HCT116 (cell line): ENCODE measurements at regions of chr1 and their contacts with region 1.

Region 1: DNA sequence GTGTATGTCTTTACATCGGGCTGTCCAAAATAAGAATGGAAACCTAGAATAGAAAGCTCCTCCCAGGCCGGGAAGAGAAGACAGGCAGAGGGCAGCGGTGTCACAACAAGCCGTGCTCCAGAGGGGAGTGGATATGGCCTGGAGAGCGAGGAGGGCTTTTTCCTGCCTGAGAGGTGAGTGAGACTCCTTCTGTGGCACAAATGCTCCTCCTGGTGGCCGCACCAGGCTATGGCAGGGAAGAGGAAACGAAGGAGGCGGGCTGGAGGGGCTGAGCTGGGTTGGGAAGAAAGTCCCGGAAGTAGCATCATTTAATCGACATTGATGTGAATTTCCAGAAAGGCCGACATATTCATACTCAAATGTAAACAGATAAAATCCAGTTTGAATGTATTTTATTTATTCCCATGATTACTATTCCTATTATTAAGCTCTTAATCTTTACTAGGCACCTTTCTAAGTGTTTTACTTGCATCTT is 54.7 kb downstream of the MEF2D start:
- DNase-seq: peak; percentile 81
- ATAC-seq: peak; percentile 97
- H3K4me3 ChIP-seq: no peak overlapping the region
- H3K27ac ChIP-seq: peak overlapping the region; percentile 15; the same call in 1 of the 2 replicates
- H3K4me1 ChIP-seq: peaks cover 5 to 18% of the 10 kb centered on the region in 2 experiments; a peak in 3 of 4 replicates
- H3K27me3 ChIP-seq: no peaks in the 10 kb centered on the region
- CTCF ChIP-seq: peak; percentile 91 to 97 (median 97)
- POLR2A ChIP-seq: peak; percentile 32
- RAD21 ChIP-seq: peak; percentile 99

Region 2: DNA sequence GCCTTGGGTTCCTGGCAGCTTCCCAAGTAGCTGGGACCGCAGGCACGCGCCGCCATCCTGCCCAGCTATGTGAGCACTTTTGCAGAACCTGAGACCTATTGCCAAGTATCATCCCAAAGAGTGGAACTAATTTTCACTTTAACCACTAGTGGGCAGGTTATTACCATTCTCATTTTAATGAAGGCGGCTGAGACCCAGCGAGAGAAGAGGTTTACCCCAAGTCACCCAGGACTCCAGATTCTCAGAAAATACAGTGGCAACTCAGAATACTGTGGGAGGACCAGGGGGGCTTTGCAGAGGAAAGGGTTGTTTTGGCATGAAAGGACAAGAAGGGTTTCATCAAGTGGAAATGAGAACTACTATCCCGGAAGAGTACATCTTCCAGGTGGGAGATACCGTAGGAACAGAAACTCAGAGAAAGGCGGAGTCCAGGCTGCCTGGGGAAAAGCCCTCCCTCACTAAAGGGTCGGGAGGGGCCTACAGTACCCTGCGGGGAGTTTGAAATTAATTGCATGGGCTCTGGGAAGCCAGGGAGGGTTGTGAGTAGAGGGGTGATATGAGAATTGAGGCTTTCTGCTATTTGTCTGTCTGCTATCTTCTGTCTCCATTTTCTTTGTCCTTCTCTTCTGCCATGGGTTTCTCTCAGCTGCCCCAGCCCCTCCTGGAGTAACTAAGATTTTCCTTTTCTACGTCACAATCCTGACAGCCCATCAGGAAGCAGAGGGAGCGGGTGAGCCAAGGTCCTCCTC is 299.6 kb before region 1 on chr1:
- CTCF ChIA-PET with region 1: no interaction called
- POLR2A ChIA-PET with region 1: no interaction called
- RAD21 ChIA-PET with region 1: no interaction called
- intact Hi-C with region 1: loop called (anchors 10 kb)
- DNase-seq: peak; percentile 74
- ATAC-seq: peak; percentile 82
- H3K4me3 ChIP-seq: no peak overlapping the region
- H3K27ac ChIP-seq: no peak overlapping the region
- H3K4me1 ChIP-seq: peaks cover 9 to 17% of the 10 kb centered on the region in 2 experiments
- H3K27me3 ChIP-seq: no peaks in the 10 kb centered on the region; the same call in 1 of the 2 replicates
- CTCF ChIP-seq: peak; percentile 61 to 91 (median 82)
- POLR2A ChIP-seq: no peak
- RAD21 ChIP-seq: peak; percentile 91

Region 3: DNA sequence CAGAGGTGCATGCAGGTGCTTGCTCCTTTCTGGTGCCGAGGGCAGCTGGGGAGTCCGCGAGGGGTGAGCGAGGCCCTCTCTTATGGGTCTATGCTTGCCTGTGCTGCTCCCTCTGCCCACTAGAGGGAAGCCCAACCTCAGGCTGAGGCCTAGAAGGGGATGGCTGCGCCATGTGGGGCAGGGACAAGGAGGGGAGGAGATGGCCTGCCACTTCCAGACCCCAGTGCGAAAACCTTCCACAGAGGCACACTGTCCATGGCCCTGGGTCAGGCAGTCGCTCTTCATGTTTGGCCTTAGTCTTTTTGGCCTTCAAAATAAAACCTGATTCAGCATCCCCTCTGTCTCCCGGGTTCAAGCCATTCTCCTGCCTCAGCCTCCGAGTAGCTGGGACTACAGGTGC is 62.8 kb before region 1 on chr1:
- CTCF ChIA-PET with region 1: interaction called, 322 read pairs
- POLR2A ChIA-PET with region 1: interaction called, 25 read pairs
- RAD21 ChIA-PET with region 1: interaction called, 33 to 51 read pairs
- intact Hi-C with region 1: loop called (anchors 1 kb)
- DNase-seq: peak; percentile 45
- ATAC-seq: peak; percentile 91
- H3K4me3 ChIP-seq: no peak overlapping the region
- H3K27ac ChIP-seq: no peak overlapping the region
- H3K4me1 ChIP-seq: peaks cover 8 to 9% of the 10 kb centered on the region in 2 experiments
- H3K27me3 ChIP-seq: no peaks in the 10 kb centered on the region
- CTCF ChIP-seq: peak; percentile 87 to 92 (median 91)
- POLR2A ChIP-seq: no peak
- RAD21 ChIP-seq: peak; percentile 94

Region 4: DNA sequence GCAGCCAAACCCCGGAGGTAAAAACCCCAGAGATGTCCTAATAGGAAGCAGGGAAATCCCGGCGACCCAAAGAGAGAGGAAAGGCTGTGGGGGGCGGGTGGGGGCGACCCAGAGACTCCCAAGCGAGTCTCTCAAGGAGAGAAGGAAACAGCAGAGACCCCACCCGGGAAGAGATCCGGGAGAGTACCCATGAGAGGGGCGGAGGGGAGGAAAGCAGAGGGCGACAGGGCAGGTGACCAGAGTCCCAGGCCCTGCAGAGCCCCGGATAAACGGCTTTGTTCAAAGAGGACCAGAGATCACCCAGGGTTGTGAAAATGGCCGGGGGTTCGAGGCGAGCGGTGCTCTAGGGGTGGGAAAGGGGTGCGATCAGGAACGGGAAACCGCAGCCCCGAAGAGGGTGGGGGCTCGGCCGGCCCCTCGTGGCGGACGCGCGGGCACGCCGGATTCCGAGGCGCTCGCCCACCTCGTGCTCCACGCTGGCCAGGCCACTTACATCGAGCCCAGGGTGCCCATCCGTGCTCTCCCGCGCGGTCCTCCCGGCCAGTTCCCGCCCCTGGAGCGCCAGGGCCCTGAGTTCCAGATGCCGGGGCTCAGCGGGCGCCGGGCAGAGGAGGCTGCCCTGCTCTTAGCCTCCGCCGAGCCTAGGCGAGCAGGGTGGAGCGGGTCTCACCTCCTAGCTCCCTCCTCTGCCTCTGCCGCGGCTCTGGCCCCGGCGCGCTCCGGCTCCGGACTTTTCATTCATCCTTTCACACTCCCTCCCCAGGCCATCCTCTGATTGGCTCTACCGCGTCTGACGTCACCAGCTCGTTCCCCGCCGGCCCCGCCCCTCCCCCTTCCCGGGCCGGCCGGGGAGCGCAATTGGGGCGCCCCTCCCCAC is 24.5 kb before region 1 on chr1:
- CTCF ChIA-PET with region 1: interaction called, 6 read pairs
- POLR2A ChIA-PET with region 1: interaction called, 4 read pairs
- RAD21 ChIA-PET with region 1: interaction called in 1 of 2 experiments, 11 read pairs
- intact Hi-C with region 1: no loop called
- DNase-seq: peak; percentile 71
- ATAC-seq: peak; percentile 92
- H3K4me3 ChIP-seq: peak overlapping the region; percentile 69 to 73
- H3K27ac ChIP-seq: peak overlapping the region; percentile 76
- H3K4me1 ChIP-seq: peaks cover 10 to 46% of the 10 kb centered on the region in 2 experiments; a peak in 3 of 4 replicates
- H3K27me3 ChIP-seq: no peaks in the 10 kb centered on the region
- CTCF ChIP-seq: no peak
- POLR2A ChIP-seq: peak; percentile 93
- RAD21 ChIP-seq: no peak

Region 5: GRCh38 chr1:156500797-156501499 is 55.1 kb after region 1 on chr1:
- CTCF ChIA-PET with region 1: interaction called, 11 read pairs
- POLR2A ChIA-PET with region 1: no interaction called
- RAD21 ChIA-PET with region 1: interaction called, 3 read pairs
- intact Hi-C with region 1: no loop called
- DNase-seq: peak; percentile 86
- ATAC-seq: peak; percentile 76
- H3K4me3 ChIP-seq: peak overlapping the region; percentile 89 to 97
- H3K27ac ChIP-seq: peak overlapping the region; percentile 99
- H3K4me1 ChIP-seq: peaks cover 57 to 89% of the 10 kb centered on the region in 2 experiments
- H3K27me3 ChIP-seq: no peaks in the 10 kb centered on the region
- CTCF ChIP-seq: peak in 2 of 3 experiments; percentile 54 to 59; a peak in 4 of 6 replicates
- POLR2A ChIP-seq: no peak
- RAD21 ChIP-seq: no peak

Region 6: DNA sequence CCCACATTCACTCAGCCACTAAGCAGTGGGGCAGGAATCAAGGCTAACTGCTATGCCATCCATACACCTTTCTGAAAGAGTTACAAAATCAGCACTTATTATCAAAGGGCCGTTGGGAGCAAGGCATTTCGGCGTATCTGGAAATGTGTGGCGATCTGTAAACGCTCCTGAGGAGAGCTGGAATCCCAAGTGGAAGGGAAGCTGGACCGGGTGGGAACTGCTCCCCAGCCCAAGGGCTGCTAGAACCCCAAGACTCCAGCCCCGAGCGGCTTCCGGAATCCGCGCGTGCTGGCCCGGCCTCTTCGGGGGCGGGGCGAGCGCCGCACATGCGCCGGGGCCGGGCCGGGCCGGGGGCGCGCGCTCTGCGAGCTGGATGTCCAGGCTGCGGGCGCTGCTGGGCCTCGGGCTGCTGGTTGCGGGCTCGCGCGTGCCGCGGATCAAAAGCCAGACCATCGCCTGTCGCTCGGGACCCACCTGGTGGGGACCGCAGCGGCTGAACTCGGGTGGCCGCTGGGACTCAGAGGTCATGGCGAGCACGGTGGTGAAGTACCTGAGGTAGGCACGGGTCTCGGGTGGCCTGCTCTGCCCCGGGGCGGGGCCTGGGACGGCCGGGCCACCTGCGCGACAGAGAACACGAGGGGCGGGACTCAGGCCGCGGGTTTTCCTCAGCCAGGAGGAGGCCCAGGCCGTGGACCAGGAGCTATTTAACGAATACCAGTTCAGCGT is 145.8 kb after region 1 on chr1 and contains the start of gene NAXE:
- CTCF ChIA-PET with region 1: no interaction called
- POLR2A ChIA-PET with region 1: no interaction called
- RAD21 ChIA-PET with region 1: no interaction called
- intact Hi-C with region 1: no loop called
- DNase-seq: no peak
- ATAC-seq: peak; percentile 88
- H3K4me3 ChIP-seq: peak within 1 kb of the TSS; percentile 60 to 95
- H3K27ac ChIP-seq: peak within 1 kb of the TSS; percentile 89
- H3K4me1 ChIP-seq: peaks cover 6 to 30% of the 10 kb centered on the region in 2 experiments; a peak in 3 of 4 replicates
- H3K27me3 ChIP-seq: no peaks in the 10 kb centered on the region
- CTCF ChIP-seq: no peak
- POLR2A ChIP-seq: peak; percentile 86
- RAD21 ChIP-seq: no peak
- total RNA-seq, gene NAXE: 139 TPM